Activated T-helper 1 cell treated with anti-CD3 and anti-CD28 coated beads, Interleukin-12 subunit alpha, Interleukin-12 subunit beta, Interleukin-2, Interleukin-4 antibody, amounts not matched to agents 30 ng/mL and 10 ng/mL and 1 ng/mL, durations not matched to agents 14 hours and 24 hours and 36 hours (primary cell): ENCODE measurements at regions of chr7 and their contacts with region 1.

Region 1: DNA sequence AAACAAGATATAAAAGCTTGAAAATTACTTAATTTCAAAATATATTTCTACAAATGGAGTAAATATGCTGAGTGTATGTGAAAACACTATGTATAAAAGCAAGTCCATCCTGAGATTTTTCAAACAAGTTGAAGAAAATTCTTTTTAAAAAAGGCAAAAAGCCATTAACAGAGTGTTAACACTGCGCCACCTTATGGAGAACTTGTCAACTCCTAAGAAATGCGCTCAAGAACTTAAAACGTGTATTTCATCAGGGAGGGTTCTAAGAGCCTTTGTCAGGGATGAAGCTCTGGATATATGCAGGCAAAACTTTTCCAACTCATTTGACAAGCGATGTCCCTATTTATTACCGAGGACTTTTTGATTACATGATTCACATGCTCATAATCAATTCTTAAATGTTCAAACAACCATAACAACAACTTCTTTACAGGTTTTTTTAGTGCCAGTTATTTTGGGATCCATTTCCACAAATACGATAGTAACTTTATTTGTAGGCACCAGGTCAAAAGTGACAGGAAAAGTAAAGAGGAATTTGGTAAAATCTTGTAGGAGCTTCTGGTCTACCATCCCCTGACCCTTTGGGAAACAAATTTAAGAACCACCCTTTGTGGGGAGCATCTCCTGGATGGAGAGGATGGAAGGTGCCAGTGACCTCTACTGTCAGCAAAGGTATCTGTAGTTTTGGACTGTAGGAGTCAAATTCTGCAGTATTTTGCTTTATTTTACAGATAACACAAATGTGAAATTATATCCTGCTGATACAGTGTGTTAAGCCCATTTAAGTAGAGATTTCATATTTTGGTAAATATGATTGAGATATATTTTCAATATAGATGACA is 23.2 kb downstream of the CALCR start:
- DNase-seq: no peak
- H3K4me3 Mint-ChIP-seq: no peak overlapping the region
- H3K27ac Mint-ChIP-seq: no peak overlapping the region
- H3K4me1 Mint-ChIP-seq: no peaks in the 10 kb centered on the region
- H3K27me3 Mint-ChIP-seq: peaks cover 2% of the 10 kb centered on the region

Region 2: DNA sequence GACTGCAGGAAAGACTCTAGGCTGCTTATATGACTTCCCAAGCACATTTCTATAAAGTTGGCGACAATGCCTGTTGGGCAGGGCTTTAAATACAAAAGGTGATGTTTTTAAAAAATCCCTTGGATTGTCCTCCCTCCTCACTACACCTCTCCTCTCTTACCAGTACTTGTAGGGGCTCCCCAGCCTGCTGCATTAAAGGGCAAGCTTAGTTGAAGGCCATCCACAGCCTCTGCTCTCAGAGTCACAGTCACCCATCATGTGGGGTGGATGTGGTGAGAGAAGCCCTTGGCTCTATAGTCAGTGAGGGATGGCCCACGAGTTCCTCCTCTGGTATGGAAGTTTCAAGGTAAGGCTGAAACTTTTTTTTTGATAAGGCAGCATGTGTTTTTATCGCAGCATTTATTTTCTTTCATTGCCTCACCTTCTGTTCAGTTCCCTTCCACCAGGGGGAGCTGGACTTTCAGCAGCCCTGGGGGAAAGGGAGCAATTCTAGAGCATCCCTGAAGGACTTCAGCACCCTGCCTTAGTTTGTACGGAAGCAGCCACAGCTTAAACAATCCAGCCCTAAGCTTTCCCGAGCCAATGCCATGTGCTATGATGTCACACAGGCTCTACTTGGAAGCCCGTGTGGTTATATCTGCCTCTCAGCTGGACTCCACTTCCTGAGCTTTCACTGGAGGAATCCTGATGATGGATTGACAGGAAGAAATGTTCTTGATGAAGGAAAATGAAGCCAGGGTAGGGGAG is 108.6 kb before region 1 on chr7:
- intact Hi-C with region 1: loop called (anchors 10 kb)
- DNase-seq: peak; percentile 1
- H3K4me3 Mint-ChIP-seq: no peak overlapping the region
- H3K27ac Mint-ChIP-seq: no peak overlapping the region
- H3K4me1 Mint-ChIP-seq: no peaks in the 10 kb centered on the region
- H3K27me3 Mint-ChIP-seq: peaks cover 2% of the 10 kb centered on the region

Region 3: DNA sequence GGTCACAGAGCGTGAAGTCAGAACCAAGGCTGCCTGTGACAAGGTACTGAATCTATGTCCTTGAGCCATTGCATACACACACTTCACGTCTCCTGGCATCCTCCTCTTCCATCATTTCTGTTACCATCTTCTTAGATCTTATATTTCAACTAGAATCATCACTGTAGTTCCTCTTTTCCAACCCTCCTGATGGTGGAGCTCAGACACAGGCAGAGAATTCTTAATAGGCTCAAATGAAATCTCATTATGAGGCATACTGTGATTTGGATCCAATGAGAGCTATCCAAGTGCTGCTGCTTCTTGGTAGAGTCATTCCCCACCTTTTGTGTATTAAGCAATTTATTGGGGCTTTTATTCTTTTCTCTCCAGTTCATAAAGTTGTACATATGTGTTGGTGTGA is 89.9 kb before region 1 on chr7:
- intact Hi-C with region 1: no loop called
- DNase-seq: no peak
- H3K4me3 Mint-ChIP-seq: no peak overlapping the region
- H3K27ac Mint-ChIP-seq: no peak overlapping the region
- H3K4me1 Mint-ChIP-seq: no peaks in the 10 kb centered on the region
- H3K27me3 Mint-ChIP-seq: peaks cover 4% of the 10 kb centered on the region